ENCODE measurements at regions of chr13 and their contacts with region 1.

Region 1: DNA sequence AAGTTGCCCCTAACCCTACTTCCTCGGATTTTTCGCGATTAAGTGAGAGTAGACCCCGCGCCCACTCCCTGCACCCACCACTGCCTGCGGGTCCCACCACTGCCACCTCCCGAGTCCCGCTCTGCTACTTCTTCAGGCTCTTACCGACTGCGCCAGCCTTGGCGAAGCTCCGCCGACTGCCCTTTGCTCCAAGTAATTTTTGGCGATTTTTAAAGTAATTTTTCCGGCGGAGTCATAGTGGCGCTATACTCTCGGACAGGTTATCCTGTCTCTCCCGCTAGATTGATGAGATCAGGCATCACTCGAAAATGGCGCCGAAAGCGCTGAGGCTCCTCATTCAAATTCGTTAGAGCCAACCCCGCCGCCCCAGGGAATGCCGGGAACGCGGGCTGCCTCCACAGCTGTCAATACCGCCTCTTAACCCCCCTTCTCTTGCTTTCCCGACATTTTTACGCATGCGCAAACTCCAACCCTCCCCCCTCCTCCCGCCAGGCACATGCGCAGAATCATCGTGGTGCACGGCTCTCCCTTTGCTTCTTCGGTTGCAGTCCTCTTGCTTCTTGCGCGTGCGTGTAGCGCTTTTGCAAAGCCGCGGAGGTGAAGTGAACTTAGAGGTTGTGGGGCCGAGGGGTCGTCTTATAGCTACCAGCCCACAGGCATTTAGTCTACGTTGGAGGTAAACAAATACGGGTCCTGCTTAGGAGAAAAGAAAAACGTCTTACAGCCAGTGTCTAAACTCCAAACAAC is 66.6 kb downstream of the KCNRG start:
- DNase-seq: peak; percentile 94 to 99 (median 99)
- ATAC-seq: peak; percentile 88
- H3K4me3 ChIP-seq: peak overlapping the region; percentile 63
- H3K4me3 Mint-ChIP-seq: peak overlapping the region; percentile 90 to 100 (median 95)
- H3K27ac ChIP-seq: peak overlapping the region; percentile 86
- H3K27ac Mint-ChIP-seq: peak overlapping the region; percentile 88 to 99 (median 94)
- H3K4me1 ChIP-seq: peaks cover 17% of the 10 kb centered on the region in 2 donors
- H3K4me1 Mint-ChIP-seq: peaks cover 13 to 63% (median 49%) of the 10 kb centered on the region in 7 donors
- H3K27me3 ChIP-seq: peaks cover 0 to 8% of the 10 kb centered on the region in 2 donors
- H3K27me3 Mint-ChIP-seq: peaks cover 0 to 11% (median 7%) of the 10 kb centered on the region in 5 donors

Region 2: DNA sequence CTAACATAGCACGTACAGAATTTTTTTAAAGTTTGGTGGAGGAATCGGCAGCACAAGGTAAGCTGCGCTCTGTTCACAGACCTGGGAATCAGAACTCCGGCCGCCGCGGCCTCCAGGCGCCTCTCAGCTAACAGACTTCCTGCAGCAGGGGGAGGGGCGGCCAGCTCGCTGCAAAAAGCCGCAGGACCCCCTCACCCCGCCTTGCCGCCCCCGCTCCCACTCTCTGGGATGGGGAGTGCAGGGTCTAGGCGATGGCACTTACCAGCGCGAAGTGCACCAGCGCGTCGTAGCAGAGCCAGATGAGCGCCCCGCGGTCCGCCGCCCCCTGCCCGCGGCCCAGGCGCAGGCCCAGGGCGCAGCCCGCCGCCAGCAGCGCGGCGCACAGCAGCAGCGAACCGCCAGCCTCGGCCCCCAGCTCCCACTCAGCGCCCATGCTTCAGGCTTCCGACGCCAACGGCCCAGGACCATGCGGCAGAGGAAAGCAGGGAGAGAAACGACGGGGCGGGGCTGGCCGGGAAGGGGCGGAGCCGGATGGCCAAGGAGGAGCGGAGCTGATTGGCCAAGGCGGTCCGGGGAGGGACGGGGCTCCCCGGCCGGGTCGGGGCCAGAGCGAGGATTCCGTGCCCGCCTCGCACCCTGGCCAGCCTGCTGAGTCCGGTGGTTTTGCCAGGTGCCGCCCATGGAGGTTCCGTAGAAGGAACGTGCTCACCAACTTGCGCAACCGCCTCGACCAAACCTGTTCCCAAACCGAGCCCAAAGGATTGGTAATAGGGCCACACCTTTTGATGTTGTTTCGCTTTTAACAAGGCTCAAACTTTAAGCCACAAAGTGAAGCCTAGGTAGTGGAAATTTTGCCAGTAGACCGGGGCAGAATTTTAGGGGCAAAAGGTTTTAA is 390.6 kb before region 1 on chr13 and contains the start of gene EBPL:
- CTCF ChIA-PET with region 1: no interaction called
- POLR2A ChIA-PET with region 1: no interaction called
- intact Hi-C with region 1: loop called (anchors 2 to 10 kb)
- DNase-seq: peak; percentile 57 to 91 (median 73)
- ATAC-seq: peak; percentile 97
- H3K4me3 ChIP-seq: peak within 1 kb of the TSS; percentile 67
- H3K4me3 Mint-ChIP-seq: peak within 1 kb of the TSS; percentile 88 to 96 (median 92)
- H3K27ac ChIP-seq: peak within 1 kb of the TSS; percentile 56
- H3K27ac Mint-ChIP-seq: peak within 1 kb of the TSS; percentile 73 to 91 (median 81)
- H3K4me1 ChIP-seq: peaks cover 0 to 17% of the 10 kb centered on the region in 2 donors
- H3K4me1 Mint-ChIP-seq: peaks cover 21 to 58% (median 45%) of the 10 kb centered on the region in 7 donors
- H3K27me3 ChIP-seq: no peaks in the 10 kb centered on the region
- H3K27me3 Mint-ChIP-seq: no peaks in the 10 kb centered on the region
- total RNA-seq, gene EBPL: 13.3 to 34.9 (median 20.4) TPM

Region 3: GRCh38 chr13:49976314-49977258 is 105.3 kb before region 1 on chr13:
- CTCF ChIA-PET with region 1: interaction called, 10 read pairs
- POLR2A ChIA-PET with region 1: no interaction called
- intact Hi-C with region 1: loop called (anchors 1 to 5 kb)
- DNase-seq: peak; percentile 54 to 77 (median 66)
- ATAC-seq: peak; percentile 94
- H3K4me3 ChIP-seq: no peak overlapping the region
- H3K4me3 Mint-ChIP-seq: no peak overlapping the region
- H3K27ac ChIP-seq: no peak overlapping the region
- H3K27ac Mint-ChIP-seq: peak overlapping the region in 1 of 9 donors; percentile 38
- H3K4me1 ChIP-seq: no peaks in the 10 kb centered on the region
- H3K4me1 Mint-ChIP-seq: peaks cover 0 to 10% (median 0%) of the 10 kb centered on the region in 7 donors
- H3K27me3 ChIP-seq: no peaks in the 10 kb centered on the region
- H3K27me3 Mint-ChIP-seq: no peaks in the 10 kb centered on the region

Region 4: DNA sequence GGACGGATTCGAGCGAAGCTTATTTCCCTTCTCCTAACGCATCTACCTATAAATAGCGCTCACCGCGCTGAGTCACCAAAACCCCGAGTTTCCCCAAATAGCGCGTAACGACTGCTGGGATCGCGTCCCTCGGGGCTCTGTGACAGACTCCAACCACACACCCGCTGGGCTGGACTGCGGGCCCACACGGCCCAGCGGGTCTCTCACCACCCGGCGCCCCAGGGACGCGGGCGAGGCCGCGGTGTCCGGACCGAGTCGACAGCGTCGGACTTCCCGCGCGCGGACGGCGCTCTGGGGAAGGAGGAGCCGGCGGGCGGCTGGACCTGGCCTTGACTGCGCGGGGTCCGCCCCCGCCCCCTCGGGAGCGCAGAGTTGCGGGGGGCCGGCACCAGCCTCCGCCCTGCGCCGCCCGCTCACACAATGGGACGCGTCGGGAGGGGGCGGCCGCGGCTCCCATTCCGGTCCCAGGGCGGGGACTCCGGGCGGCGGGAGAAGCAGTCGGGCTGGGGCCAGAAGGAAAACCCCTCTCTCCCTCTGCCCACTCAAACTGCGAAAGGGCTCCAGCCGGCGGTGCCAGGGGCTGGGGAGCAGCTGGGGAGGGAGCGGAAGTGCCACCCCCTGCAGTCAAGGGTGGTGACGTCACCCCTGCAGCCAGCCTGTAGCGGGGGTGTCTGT is 42.1 kb after region 1 on chr13:
- CTCF ChIA-PET with region 1: interaction called, 71 read pairs
- POLR2A ChIA-PET with region 1: interaction called, 363 read pairs
- intact Hi-C with region 1: loop called (anchors 1 kb)
- DNase-seq: peak in 7 of 9 donors; percentile 46 to 88 (median 64)
- ATAC-seq: peak; percentile 82
- H3K4me3 ChIP-seq: peak overlapping the region; percentile 52
- H3K4me3 Mint-ChIP-seq: peak overlapping the region; percentile 86 to 96 (median 93)
- H3K27ac ChIP-seq: peak overlapping the region; percentile 95
- H3K27ac Mint-ChIP-seq: peak overlapping the region; percentile 90 to 99 (median 97)
- H3K4me1 ChIP-seq: peaks cover 24 to 29% of the 10 kb centered on the region in 2 donors
- H3K4me1 Mint-ChIP-seq: peaks cover 25 to 61% (median 50%) of the 10 kb centered on the region in 7 donors
- H3K27me3 ChIP-seq: peaks cover 0 to 11% of the 10 kb centered on the region in 2 donors
- H3K27me3 Mint-ChIP-seq: peaks cover 1 to 15% (median 12%) of the 10 kb centered on the region in 5 donors

Region 5: GRCh38 chr13:50170447-50171037 is 88.7 kb after region 1 on chr13:
- CTCF ChIA-PET with region 1: no interaction called
- POLR2A ChIA-PET with region 1: no interaction called
- intact Hi-C with region 1: no loop called
- DNase-seq: no peak
- ATAC-seq: no peak
- H3K4me3 ChIP-seq: no peak overlapping the region
- H3K4me3 Mint-ChIP-seq: no peak overlapping the region
- H3K27ac ChIP-seq: no peak overlapping the region
- H3K27ac Mint-ChIP-seq: no peak overlapping the region
- H3K4me1 ChIP-seq: no peaks in the 10 kb centered on the region
- H3K4me1 Mint-ChIP-seq: peaks cover 0 to 4% (median 0%) of the 10 kb centered on the region in 7 donors
- H3K27me3 ChIP-seq: no peaks in the 10 kb centered on the region
- H3K27me3 Mint-ChIP-seq: peaks cover 0 to 37% (median 2%) of the 10 kb centered on the region in 5 donors

Region 6: DNA sequence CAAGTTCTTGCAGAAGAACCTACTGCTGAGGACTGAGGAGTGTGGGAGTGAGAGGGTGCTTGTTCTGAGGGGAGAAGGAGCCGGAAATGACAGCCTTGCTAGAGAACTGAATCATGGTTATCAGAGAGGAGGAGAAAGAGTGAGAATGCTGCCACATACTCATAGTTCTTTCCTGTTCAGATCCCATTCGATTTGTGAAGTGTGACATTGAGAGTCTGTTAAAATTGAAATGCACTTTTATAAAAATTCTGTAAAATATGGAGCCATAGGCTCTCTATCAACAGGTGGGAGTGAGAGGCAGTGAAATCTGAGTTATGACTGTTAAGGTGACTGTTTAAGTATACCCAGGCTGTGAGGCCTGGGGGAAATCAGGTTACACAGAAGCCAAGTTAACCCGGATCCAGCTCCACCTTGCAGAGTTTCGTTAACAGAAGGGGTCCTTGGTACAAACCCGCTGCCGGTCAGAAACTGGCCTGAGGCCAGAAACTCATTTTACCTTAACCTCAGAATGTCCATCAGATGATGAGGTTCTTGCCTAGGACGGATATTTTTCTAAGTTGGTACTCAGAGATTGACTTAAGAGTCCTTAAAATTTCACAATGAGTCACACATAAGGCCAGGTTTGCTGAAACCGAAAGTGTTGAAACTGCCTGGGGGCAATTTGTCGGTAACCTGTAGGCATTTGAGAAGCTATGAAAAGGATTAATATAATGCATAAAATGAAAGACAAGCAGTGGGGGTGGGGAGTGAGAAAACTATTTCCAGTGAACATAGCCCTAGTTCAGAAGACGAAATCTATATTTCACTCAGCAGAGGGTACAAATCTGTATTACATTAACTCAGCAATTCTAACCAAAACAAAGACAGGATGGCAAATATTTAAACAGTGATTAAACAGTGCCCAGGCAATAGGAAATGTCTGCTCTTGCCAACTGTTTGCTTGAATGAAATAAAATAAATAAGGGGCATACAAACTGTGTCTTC is 283.8 kb after region 1 on chr13:
- CTCF ChIA-PET with region 1: no interaction called
- POLR2A ChIA-PET with region 1: interaction called, 3 read pairs
- intact Hi-C with region 1: loop called (anchors 1 to 10 kb)
- DNase-seq: peak in 4 of 9 donors; percentile 9 to 33 (median 16)
- ATAC-seq: peak; percentile 71
- H3K4me3 ChIP-seq: peak overlapping the region; percentile 7
- H3K4me3 Mint-ChIP-seq: peak overlapping the region in 9 of 10 donors; percentile 7 to 78 (median 68)
- H3K27ac ChIP-seq: peak overlapping the region; percentile 53
- H3K27ac Mint-ChIP-seq: peak overlapping the region; percentile 51 to 88 (median 82)
- H3K4me1 ChIP-seq: peaks cover 6 to 28% of the 10 kb centered on the region in 2 donors
- H3K4me1 Mint-ChIP-seq: peaks cover 14 to 39% (median 25%) of the 10 kb centered on the region in 7 donors
- H3K27me3 ChIP-seq: no peaks in the 10 kb centered on the region
- H3K27me3 Mint-ChIP-seq: peaks cover 0 to 53% (median 5%) of the 10 kb centered on the region in 5 donors

Region 7: GRCh38 chr13:50531917-50532899 is 450.4 kb after region 1 on chr13:
- CTCF ChIA-PET with region 1: interaction called, 3 read pairs
- POLR2A ChIA-PET with region 1: no interaction called
- intact Hi-C with region 1: loop called (anchors 1 to 2 kb)
- DNase-seq: no peak
- ATAC-seq: no peak
- H3K4me3 ChIP-seq: no peak overlapping the region
- H3K4me3 Mint-ChIP-seq: no peak overlapping the region
- H3K27ac ChIP-seq: no peak overlapping the region
- H3K27ac Mint-ChIP-seq: no peak overlapping the region
- H3K4me1 ChIP-seq: no peaks in the 10 kb centered on the region
- H3K4me1 Mint-ChIP-seq: peaks cover 9 to 28% (median 13%) of the 10 kb centered on the region in 7 donors
- H3K27me3 ChIP-seq: no peaks in the 10 kb centered on the region
- H3K27me3 Mint-ChIP-seq: peaks cover 0 to 17% (median 11%) of the 10 kb centered on the region in 5 donors

Region 8: DNA sequence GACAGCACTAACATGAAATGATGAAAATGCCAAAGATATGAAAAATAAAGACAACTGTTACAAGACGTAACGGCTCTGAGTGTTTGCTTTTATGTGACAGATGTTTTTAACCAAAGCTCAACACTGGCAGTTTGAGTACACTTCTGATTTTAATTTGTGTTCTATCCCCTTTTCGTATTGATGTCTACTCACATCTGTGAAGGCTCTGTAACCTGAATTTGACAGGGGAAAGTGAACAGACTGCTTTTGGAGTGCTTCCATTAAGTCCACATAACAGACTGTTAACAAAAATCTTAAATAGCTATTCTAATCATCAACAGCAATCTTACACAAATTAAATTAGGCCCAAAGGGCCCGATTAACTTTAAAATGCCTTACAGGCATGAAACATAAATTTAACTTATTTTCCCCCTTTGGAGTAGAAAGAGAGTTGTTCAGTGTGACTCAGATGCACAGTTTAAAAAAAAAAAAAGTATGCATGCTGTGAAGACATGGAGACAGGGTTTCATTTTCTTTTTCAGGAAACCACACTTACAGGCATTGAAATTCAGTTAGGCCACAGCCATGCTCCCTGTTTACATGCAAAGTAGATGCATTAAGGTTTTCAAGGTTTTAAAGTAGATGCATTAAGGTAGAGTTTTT is 811.5 kb after region 1 on chr13:
- CTCF ChIA-PET with region 1: interaction called, 4 read pairs
- POLR2A ChIA-PET with region 1: no interaction called
- intact Hi-C with region 1: loop called (anchors 5 kb)
- DNase-seq: peak in 7 of 9 donors; percentile 34 to 68 (median 55)
- ATAC-seq: peak; percentile 91
- H3K4me3 ChIP-seq: peak overlapping the region; percentile 30
- H3K4me3 Mint-ChIP-seq: peak overlapping the region; percentile 67 to 88 (median 82)
- H3K27ac ChIP-seq: peak overlapping the region; percentile 69
- H3K27ac Mint-ChIP-seq: peak overlapping the region; percentile 82 to 98 (median 95)
- H3K4me1 ChIP-seq: peaks cover 16 to 27% of the 10 kb centered on the region in 2 donors
- H3K4me1 Mint-ChIP-seq: peaks cover 26 to 50% (median 47%) of the 10 kb centered on the region in 7 donors
- H3K27me3 ChIP-seq: no peaks in the 10 kb centered on the region
- H3K27me3 Mint-ChIP-seq: no peaks in the 10 kb centered on the region